Heart left ventricle (tissue), 16 donors: ENCODE measurements at regions of chr17 and their contacts with region 1.

Region 1: GRCh38 chr17:74736513-74737298 is at the start of gene RAB37:
- DNase-seq: peak in 1 of 5 donors; percentile 79
- ATAC-seq: peak in 3 of 4 donors; percentile 45 to 57 (median 53)
- H3K4me3 ChIP-seq: peak within 1 kb of the TSS; percentile 16 to 59 (median 45)
- H3K27ac ChIP-seq: peak within 1 kb of the TSS in 9 of 12 donors; percentile 6 to 87 (median 36)
- H3K4me1 ChIP-seq: peaks cover 0 to 56% (median 19%) of the 10 kb centered on the region in 12 donors
- H3K27me3 ChIP-seq: peaks cover 18 to 55% (median 32%) of the 10 kb centered on the region in 9 donors
- CTCF ChIP-seq: peak in 10 of 12 donors; percentile 26 to 56 (median 42)
- POLR2A ChIP-seq: no peak
- total RNA-seq, gene RAB37: 0.76 to 3.6 (median 1.7) TPM

Region 2: DNA sequence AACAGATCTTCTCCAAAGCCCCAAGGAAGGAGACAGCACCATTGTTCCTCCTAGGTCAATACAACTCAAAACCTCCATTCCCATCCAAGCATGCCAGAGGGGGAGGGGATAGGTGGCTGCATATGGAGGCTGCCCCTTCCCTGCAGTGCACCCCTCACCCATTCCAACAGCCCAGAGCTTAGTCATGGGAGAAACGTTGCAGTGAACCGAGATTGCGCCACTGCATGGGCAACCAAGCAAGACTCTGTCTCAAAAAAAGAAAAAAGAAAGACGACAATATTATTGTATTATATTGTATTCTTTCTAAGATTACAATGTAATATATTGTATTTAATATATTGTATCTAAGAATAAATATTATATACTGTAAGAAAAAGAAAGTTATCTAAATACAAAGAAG is 76.8 kb before region 1 on chr17:
- intact Hi-C with region 1: loop called (anchors 1 to 5 kb)
- DNase-seq: no peak
- ATAC-seq: no peak
- H3K4me3 ChIP-seq: no peak overlapping the region
- H3K27ac ChIP-seq: no peak overlapping the region
- H3K4me1 ChIP-seq: peaks cover 0 to 3% (median 0%) of the 10 kb centered on the region in 12 donors
- H3K27me3 ChIP-seq: peaks cover 0 to 78% (median 25%) of the 10 kb centered on the region in 9 donors
- CTCF ChIP-seq: no peak
- POLR2A ChIP-seq: no peak